H1 (cell line): ENCODE measurements at regions of chr20 and their contacts with region 1.

Region 1: DNA sequence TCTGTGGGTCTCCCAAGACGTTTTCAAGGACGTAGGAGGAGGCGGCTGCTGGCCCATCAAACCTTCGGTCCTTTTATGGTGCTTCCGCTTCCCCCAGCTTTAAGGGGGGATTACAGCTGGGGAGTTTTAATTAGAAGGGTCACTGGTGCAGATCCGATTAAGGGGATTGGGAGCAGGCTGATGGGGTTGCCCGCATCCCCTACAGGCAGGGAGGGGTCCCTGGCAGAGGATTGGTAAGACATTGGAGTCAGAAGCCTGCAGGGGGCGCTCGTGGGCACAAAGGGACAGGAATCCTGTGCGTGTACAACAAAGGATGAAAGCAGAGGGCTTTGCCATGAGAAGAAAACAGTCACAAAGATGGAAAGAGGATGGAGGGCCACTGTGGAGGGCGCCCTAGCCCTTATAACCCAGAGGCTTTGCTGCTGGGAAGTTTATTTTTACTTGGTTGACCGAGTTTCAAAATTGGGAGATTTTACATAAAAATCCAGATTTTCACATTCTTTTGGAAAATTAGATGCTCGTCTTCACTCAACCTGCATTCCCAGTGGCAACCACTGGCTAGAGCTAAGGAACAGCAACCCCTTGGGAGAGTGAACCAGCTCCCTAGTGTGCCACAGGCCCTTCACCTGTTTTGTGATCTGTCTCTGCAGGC is 97.9 kb downstream of the KCNB1 start:
- DNase-seq: peak; percentile 71 to 98
- H3K4me3 ChIP-seq: no peak overlapping the region
- H3K27ac ChIP-seq: no peak overlapping the region
- H3K4me1 ChIP-seq: peaks cover 2 to 8% (median 4%) of the 10 kb centered on the region in 4 experiments; a peak in 4 of 7 replicates
- H3K27me3 ChIP-seq: no peaks in the 10 kb centered on the region; a peak in 1 of 7 replicates
- CTCF ChIP-seq: peak; percentile 77 to 92 (median 89)
- EP300 ChIP-seq: no peak
- POLR2A ChIP-seq: no peak
- RAD21 ChIP-seq: peak; percentile 53 to 71

Region 2: DNA sequence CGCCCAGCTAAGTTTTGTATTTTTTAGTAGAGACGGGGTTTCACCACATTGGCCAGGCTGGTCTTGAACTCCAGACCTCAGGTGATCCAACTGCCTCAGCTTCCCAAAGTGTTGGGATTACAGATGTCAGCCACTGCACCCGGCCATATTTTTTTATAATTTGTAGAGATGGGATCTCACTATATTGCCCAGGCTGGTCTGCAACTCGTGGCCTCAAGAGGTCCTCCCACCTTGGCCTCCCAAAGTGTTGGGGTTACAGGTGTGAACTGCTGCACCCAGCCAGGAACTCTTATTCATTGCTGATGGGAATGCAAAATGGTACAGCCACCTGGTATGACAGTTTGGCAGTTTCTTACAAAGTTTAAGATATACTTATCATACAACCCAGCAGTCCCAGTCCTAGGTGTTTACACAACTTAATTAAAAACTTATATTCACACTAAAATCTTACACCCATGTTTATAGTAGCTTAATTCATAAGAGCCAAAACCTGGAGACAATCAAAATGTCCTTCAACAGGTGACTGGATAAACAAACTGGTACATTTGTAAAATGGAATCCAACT is 184.8 kb before region 1 on chr20:
- CTCF ChIA-PET with region 1: no interaction called
- POLR2A ChIA-PET with region 1: no interaction called
- DNase-seq: no peak
- H3K4me3 ChIP-seq: no peak overlapping the region
- H3K27ac ChIP-seq: no peak overlapping the region
- H3K4me1 ChIP-seq: no peaks in the 10 kb centered on the region
- H3K27me3 ChIP-seq: no peaks in the 10 kb centered on the region
- CTCF ChIP-seq: no peak
- EP300 ChIP-seq: no peak
- POLR2A ChIP-seq: no peak
- RAD21 ChIP-seq: no peak

Region 3: DNA sequence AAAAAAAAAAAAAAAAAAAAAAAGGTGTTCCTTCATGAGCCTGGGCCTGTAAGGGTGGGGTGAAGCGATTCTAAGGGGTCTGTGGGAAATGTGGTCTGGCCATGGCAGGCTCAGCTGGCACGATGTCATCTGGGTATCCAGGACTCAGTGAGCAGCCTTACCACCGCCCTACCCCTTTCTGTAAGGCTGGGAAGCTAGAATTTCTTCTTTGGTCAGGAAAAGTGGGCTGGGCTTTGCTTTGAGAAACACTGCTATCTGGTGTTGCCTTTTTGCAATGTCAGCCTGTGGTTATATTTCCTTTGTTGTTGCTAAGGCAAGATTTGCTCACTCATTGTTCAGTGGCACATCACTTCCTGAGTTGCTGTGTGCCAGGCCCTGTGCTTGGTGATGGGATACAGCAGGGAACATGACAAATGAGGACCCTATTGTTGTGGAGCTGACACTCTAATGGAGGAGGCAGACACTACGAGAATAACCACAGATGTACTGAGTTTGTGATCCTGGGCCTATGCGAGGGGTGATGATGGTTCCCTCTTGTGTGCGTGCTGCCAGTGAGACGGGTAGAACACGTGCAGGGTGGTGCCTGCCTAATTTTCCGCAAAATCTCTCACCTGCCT is 60.8 kb before region 1 on chr20:
- CTCF ChIA-PET with region 1: interaction called, 10 read pairs
- POLR2A ChIA-PET with region 1: no interaction called
- DNase-seq: no peak
- H3K4me3 ChIP-seq: no peak overlapping the region
- H3K27ac ChIP-seq: no peak overlapping the region
- H3K4me1 ChIP-seq: peaks cover 0 to 12% (median 2%) of the 10 kb centered on the region in 4 experiments; a peak in 5 of 7 replicates
- H3K27me3 ChIP-seq: peaks cover 2 to 12% (median 11%) of the 10 kb centered on the region in 4 experiments
- CTCF ChIP-seq: peak in 2 of 3 experiments; percentile 35 to 37; a peak in 3 of 4 replicates
- EP300 ChIP-seq: no peak
- POLR2A ChIP-seq: no peak
- RAD21 ChIP-seq: peak; percentile 46 to 58

Region 4: GRCh38 chr20:49356676-49357075 is 27.9 kb before region 1 on chr20:
- CTCF ChIA-PET with region 1: interaction called, 47 read pairs
- POLR2A ChIA-PET with region 1: no interaction called
- DNase-seq: no peak
- H3K4me3 ChIP-seq: no peak overlapping the region
- H3K27ac ChIP-seq: no peak overlapping the region
- H3K4me1 ChIP-seq: no peaks in the 10 kb centered on the region
- H3K27me3 ChIP-seq: no peaks in the 10 kb centered on the region; a peak in 1 of 7 replicates
- CTCF ChIP-seq: no peak
- EP300 ChIP-seq: no peak
- POLR2A ChIP-seq: no peak
- RAD21 ChIP-seq: no peak

Region 5: GRCh38 chr20:49397525-49397924 is 13.0 kb after region 1 on chr20:
- CTCF ChIA-PET with region 1: interaction called, 62 read pairs
- POLR2A ChIA-PET with region 1: no interaction called
- DNase-seq: no peak
- H3K4me3 ChIP-seq: no peak overlapping the region
- H3K27ac ChIP-seq: no peak overlapping the region
- H3K4me1 ChIP-seq: no peaks in the 10 kb centered on the region
- H3K27me3 ChIP-seq: no peaks in the 10 kb centered on the region; a peak in 3 of 7 replicates
- CTCF ChIP-seq: no peak
- EP300 ChIP-seq: no peak
- POLR2A ChIP-seq: no peak
- RAD21 ChIP-seq: no peak

Region 6: DNA sequence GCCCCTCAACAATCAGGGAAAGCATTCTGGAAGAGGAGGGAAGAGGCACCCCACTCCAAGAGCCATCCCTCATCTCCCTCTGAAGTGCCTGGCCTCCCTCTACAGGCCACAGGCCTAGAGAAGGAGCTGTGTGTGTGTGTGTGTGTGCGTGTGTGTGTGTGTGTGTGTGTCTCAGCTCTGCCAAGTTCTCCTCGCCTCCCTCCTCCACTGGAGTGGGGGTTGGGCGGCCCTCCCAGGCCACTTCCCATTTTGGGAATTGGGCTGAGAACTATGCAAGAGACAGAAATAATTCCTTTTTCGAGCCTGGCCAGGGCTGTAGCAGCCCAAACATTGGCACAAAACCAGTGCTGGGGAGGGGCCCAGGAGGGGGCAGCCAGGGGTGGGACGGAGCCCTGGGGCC is 62.2 kb after region 1 on chr20:
- CTCF ChIA-PET with region 1: interaction called, 15 read pairs
- POLR2A ChIA-PET with region 1: no interaction called
- DNase-seq: peak in 1 of 2 experiments; percentile 65
- H3K4me3 ChIP-seq: no peak overlapping the region
- H3K27ac ChIP-seq: no peak overlapping the region
- H3K4me1 ChIP-seq: peaks cover 14 to 29% (median 17%) of the 10 kb centered on the region in 4 experiments
- H3K27me3 ChIP-seq: no peaks in the 10 kb centered on the region; a peak in 1 of 7 replicates
- CTCF ChIP-seq: no peak
- EP300 ChIP-seq: no peak
- POLR2A ChIP-seq: no peak
- RAD21 ChIP-seq: peak in 1 of 2 experiments; percentile 43; a peak in 3 of 4 replicates

Region 7: GRCh38 chr20:49484180-49485140 is 99.9 kb after region 1 on chr20:
- CTCF ChIA-PET with region 1: interaction called, 70 read pairs
- POLR2A ChIA-PET with region 1: interaction called, 4 read pairs
- DNase-seq: peak; percentile 57 to 92
- H3K4me3 ChIP-seq: peak overlapping the region; percentile 41 to 72 (median 60)
- H3K27ac ChIP-seq: no peak overlapping the region
- H3K4me1 ChIP-seq: peaks cover 0 to 5% (median under 1%) of the 10 kb centered on the region in 4 experiments; a peak in 2 of 7 replicates
- H3K27me3 ChIP-seq: peaks cover 0 to 12% (median 9%) of the 10 kb centered on the region in 4 experiments; a peak in 5 of 7 replicates
- CTCF ChIP-seq: peak; percentile 67 to 97 (median 83)
- EP300 ChIP-seq: peak in 1 of 2 experiments; percentile 39; a peak in 1 of 3 replicates
- POLR2A ChIP-seq: no peak
- RAD21 ChIP-seq: peak; percentile 83 to 89

Region 8: DNA sequence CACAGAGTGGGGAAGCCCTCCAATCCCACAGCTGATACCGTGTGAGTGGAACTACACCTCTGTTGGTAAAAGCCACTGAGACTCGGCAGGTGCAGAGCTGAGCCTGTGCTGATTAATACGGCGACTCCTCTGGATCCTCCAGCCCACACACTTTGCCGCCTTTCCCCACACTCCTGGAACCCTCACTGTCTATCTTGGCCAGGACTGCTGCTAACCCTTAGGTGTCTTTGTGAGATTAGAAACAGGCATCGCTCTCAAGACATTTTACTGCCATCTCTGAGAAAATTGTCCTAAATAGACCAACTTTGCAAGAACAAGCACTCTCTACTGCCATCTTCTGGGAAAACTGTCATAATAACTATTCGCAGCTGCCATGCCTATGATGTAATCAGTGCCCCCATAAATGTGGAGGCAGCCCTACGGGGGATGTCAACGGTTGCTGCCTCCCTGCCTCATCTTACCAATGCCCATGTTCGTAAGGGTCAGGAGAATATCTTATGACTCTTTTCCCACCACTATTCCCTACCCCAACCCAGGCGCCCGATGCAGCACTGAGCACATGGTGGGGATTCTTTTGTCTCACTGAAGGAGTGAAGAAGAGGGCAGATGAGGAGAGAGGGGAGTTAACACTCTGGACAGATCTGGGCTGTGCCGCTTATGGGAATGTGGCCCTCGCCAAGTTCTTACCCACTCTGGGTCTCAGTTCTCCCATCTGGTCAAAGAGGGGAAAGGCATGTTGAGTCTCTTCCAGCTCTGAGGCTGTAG is 124.1 kb after region 1 on chr20:
- CTCF ChIA-PET with region 1: interaction called, 26 read pairs
- POLR2A ChIA-PET with region 1: no interaction called
- DNase-seq: no peak
- H3K4me3 ChIP-seq: no peak overlapping the region
- H3K27ac ChIP-seq: no peak overlapping the region
- H3K4me1 ChIP-seq: no peaks in the 10 kb centered on the region
- H3K27me3 ChIP-seq: no peaks in the 10 kb centered on the region
- CTCF ChIP-seq: peak in 2 of 3 experiments; percentile 63 to 67; a peak in 3 of 4 replicates
- EP300 ChIP-seq: no peak
- POLR2A ChIP-seq: no peak
- RAD21 ChIP-seq: peak; percentile 62 to 73